ENCODE measurements at regions of chr18 and their contacts with region 1.

Region 1: GRCh38 chr18:36015629-36016028 is 43.1 kb downstream of the RMP24 start:
- DNase-seq: no peak
- ATAC-seq: no peak
- H3K4me3 ChIP-seq: no peak overlapping the region
- H3K27ac ChIP-seq: no peak overlapping the region
- H3K4me1 ChIP-seq: no peaks in the 10 kb centered on the region
- H3K27me3 ChIP-seq: no peaks in the 10 kb centered on the region
- CTCF ChIP-seq: no peak

Region 2: GRCh38 chr18:36107477-36107876 is 91.8 kb after region 1 on chr18:
- CTCF ChIA-PET with region 1: no interaction called
- POLR2A ChIA-PET with region 1: no interaction called
- in situ Hi-C with region 1: no loop called
- intact Hi-C with region 1: no loop called
- DNase-seq: no peak
- ATAC-seq: no peak
- H3K4me3 ChIP-seq: no peak overlapping the region
- H3K27ac ChIP-seq: no peak overlapping the region
- H3K4me1 ChIP-seq: no peaks in the 10 kb centered on the region
- H3K27me3 ChIP-seq: no peaks in the 10 kb centered on the region
- CTCF ChIP-seq: no peak

Region 3: GRCh38 chr18:36129300-36130038 is 113.8 kb after region 1 on chr18 and contains the starts of genes ELP2 and SLC39A6:
- CTCF ChIA-PET with region 1: no interaction called
- POLR2A ChIA-PET with region 1: no interaction called
- in situ Hi-C with region 1: no loop called
- intact Hi-C with region 1: loop called (anchors 5 kb)
- DNase-seq: peak; percentile 53
- ATAC-seq: peak; percentile 98
- H3K4me3 ChIP-seq: peak within 1 kb of the TSS; percentile 96 to 98
- H3K27ac ChIP-seq: peak within 1 kb of the TSS; percentile 84
- H3K4me1 ChIP-seq: peaks cover 5% of the 10 kb centered on the region
- H3K27me3 ChIP-seq: no peaks in the 10 kb centered on the region
- CTCF ChIP-seq: no peak
- total RNA-seq, gene ELP2: 48.8 TPM
- total RNA-seq, gene SLC39A6: 47.6 TPM

Region 4: DNA sequence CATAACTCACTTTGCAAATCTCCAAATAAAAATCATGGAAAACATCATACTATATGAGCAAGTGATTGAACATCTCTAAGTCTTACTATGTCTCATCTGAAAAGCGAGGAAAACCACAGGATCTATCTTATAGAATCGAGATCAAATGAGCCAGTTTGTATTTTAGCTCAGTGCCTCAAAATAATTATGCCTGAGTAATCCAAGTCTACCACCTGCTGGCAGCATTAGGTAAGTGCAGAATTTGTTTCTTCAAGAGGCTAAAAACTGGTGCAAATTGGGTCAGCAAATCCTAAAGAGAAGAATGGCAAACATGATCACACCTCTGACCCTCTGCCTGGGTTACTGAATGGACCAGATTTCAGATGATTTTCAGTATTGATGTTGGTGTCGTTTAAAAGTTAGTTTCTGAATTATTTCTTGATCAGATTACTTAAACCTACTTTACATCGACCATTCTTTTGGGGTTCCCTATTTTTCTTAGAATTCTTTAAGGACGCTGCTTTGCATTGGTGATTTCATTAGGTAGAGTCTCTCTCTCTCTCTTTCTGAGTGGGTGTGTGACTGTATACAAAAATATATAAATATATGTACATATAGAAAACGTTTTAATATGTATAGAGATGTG is 269.2 kb after region 1 on chr18:
- CTCF ChIA-PET with region 1: interaction called, 3 read pairs
- POLR2A ChIA-PET with region 1: no interaction called
- in situ Hi-C with region 1: no loop called
- intact Hi-C with region 1: loop called (anchors 5 kb)
- DNase-seq: peak; percentile 59
- ATAC-seq: peak; percentile 72
- H3K4me3 ChIP-seq: no peak overlapping the region
- H3K27ac ChIP-seq: no peak overlapping the region
- H3K4me1 ChIP-seq: no peaks in the 10 kb centered on the region
- H3K27me3 ChIP-seq: no peaks in the 10 kb centered on the region; the same call in 1 of the 2 replicates
- CTCF ChIP-seq: peak; percentile 81

Region 5: GRCh38 chr18:36321658-36322407 is 306.2 kb after region 1 on chr18:
- CTCF ChIA-PET with region 1: no interaction called
- POLR2A ChIA-PET with region 1: no interaction called
- in situ Hi-C with region 1: no loop called
- intact Hi-C with region 1: no loop called
- DNase-seq: no peak
- ATAC-seq: peak; percentile 63; the same call in 1 of the 2 replicates
- H3K4me3 ChIP-seq: no peak overlapping the region
- H3K27ac ChIP-seq: no peak overlapping the region
- H3K4me1 ChIP-seq: no peaks in the 10 kb centered on the region; the same call in 1 of the 2 replicates
- H3K27me3 ChIP-seq: no peaks in the 10 kb centered on the region
- CTCF ChIP-seq: no peak

Measured in Panc1 (cell line).